ENCODE measurements at regions of chr11 and their contacts with region 1.

Region 1: GRCh38 chr11:78318321-78319114 is 99.1 kb downstream of the GAB2 start:
- DNase-seq: no peak
- ATAC-seq: peak; percentile 40
- H3K4me3 ChIP-seq: no peak overlapping the region
- H3K27ac ChIP-seq: peak overlapping the region; percentile 64
- H3K4me1 ChIP-seq: peaks cover 12 to 43% of the 10 kb centered on the region in 2 experiments
- H3K27me3 ChIP-seq: no peaks in the 10 kb centered on the region
- CTCF ChIP-seq: no peak
- EP300 ChIP-seq: no peak
- POLR2A ChIP-seq: no peak
- RAD21 ChIP-seq: no peak

Region 2: GRCh38 chr11:78188286-78189173 is 130.0 kb before region 1 on chr11 and contains the starts of genes KCTD21 and USP35:
- CTCF ChIA-PET with region 1: no interaction called
- POLR2A ChIA-PET with region 1: no interaction called
- in situ Hi-C with region 1: no loop called
- intact Hi-C with region 1: no loop called
- DNase-seq: peak; percentile 96 to 98 (median 96)
- ATAC-seq: peak; percentile 98
- H3K4me3 ChIP-seq: peak within 1 kb of the TSS; percentile 73
- H3K27ac ChIP-seq: peak within 1 kb of the TSS; percentile 41
- H3K4me1 ChIP-seq: peaks cover 41 to 44% of the 10 kb centered on the region in 2 experiments
- H3K27me3 ChIP-seq: no peaks in the 10 kb centered on the region
- CTCF ChIP-seq: no peak
- EP300 ChIP-seq: 0 out of 2 replicates have a peak, but pooled peaks have one; percentile 0
- POLR2A ChIP-seq: peak; percentile 62; the same call in 1 of the 2 replicates
- RAD21 ChIP-seq: no peak; a peak in 1 of 4 replicates
- polyA plus RNA-seq, gene KCTD21: 0.34 to 0.80 TPM
- polyA plus RNA-seq, gene USP35: 0.01 to 0.07 TPM

Region 3: DNA sequence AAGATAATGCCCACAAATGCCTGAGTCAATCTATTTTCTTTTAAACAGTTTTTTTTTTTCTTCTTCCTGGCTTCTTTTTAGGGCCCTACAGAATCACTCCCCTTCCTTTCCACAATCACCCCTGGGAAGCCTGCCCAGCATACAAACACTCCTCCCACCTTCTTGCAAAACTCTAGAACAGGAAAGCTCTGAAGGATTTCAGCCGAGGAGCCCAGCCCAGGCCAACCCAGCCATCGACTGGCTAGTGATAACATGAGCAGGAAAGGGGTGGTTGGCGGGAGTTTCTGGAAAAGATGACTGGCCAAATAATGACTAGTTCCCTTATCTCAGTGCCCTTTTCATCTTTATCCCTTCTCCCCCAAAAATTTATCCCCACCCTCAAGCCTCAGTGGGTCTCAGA is 61.6 kb before region 1 on chr11:
- CTCF ChIA-PET with region 1: no interaction called
- POLR2A ChIA-PET with region 1: interaction called, 4 read pairs
- in situ Hi-C with region 1: no loop called
- intact Hi-C with region 1: loop called (anchors 2 kb)
- DNase-seq: peak; percentile 53 to 87 (median 64)
- ATAC-seq: peak; percentile 80
- H3K4me3 ChIP-seq: no peak overlapping the region
- H3K27ac ChIP-seq: peak overlapping the region; percentile 54; the same call in 2 of the 3 replicates
- H3K4me1 ChIP-seq: peaks cover 17 to 52% of the 10 kb centered on the region in 2 experiments
- H3K27me3 ChIP-seq: no peaks in the 10 kb centered on the region
- CTCF ChIP-seq: no peak
- EP300 ChIP-seq: peak; percentile 62
- POLR2A ChIP-seq: no peak
- RAD21 ChIP-seq: peak in 1 of 2 experiments; percentile 20; a peak in 2 of 4 replicates

Measured in K562 (cell line).